Left ventricle myocardium inferior (tissue), 1 donor: ENCODE measurements at regions of chr2 and their contacts with region 1.

Region 1: DNA sequence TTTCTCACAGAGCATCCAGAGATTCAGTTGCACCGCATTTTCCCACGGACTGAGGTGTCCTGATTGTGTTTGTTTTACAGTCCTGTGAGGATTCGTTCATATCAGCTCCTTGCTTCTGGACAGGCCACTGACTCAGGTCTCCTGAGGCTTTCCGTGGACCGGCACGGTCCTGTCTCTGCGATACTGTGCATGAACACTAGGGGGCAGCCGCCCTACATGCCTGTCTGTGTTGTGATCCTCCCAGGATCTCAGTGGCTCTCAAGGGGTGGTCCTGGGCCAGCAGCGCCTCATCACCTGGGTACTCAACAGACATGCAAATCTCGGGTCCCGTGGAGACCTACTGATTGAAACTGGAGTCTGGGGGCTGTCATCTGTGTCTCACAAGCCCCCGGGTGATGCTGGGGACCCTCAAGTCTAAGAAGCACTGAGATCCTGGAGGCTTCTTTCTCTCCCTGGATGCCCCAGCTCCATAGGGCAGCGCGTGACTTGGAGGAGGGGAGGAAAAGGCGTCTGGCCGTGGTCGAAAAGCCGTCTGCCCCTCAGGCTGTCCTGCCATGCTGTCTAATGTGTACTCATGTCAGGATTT is 28.9 kb downstream of the IL1R2 start:
- DNase-seq: peak; percentile 89
- H3K4me3 ChIP-seq: no peak overlapping the region
- H3K27ac ChIP-seq: no peak overlapping the region
- H3K4me1 ChIP-seq: peaks cover 19% of the 10 kb centered on the region
- H3K27me3 ChIP-seq: no peaks in the 10 kb centered on the region
- CTCF ChIP-seq: peak; percentile 100

Region 2: GRCh38 chr2:100812116-100812515 is 1208.6 kb before region 1 on chr2:
- intact Hi-C with region 1: no loop called
- DNase-seq: no peak
- H3K4me3 ChIP-seq: no peak overlapping the region
- H3K27ac ChIP-seq: no peak overlapping the region
- H3K4me1 ChIP-seq: peaks cover 49% of the 10 kb centered on the region
- H3K27me3 ChIP-seq: no peaks in the 10 kb centered on the region
- CTCF ChIP-seq: no peak

Region 3: DNA sequence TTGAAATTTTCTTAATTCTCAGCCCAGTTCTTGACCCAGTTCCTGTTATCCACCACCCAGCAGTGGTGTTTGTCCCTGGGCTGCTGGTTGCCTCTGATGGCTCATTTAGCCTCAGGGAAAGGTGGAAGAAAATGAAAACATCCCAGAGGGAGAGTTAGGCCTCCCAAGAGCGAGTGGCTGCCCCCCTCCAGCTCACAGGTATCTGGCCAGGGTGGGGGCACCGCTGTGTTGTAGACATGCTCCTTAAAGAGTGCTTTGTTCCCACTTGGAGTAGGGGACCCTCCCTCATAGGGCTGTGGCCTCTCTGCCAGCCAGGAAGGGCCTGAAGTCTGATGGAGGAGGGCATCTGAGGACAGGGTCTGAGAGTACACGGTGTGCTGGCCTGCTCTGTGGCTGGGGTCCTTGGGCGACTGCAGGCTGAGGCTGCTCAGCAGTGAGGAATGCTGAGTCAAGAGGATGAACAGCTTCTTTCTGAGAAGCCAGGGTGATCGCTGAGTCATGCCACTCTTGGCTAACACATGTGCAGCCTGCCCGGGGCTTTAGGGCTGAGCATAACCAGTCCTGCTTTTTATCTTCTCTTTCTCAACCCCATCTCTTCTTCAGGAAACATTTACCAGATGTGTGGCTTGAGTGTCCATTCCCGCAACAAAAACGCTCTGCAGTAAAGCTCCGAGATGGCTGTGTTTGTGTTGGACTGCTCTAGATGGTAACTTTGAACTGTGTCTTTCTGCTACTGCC is 43.4 kb after region 1 on chr2:
- intact Hi-C with region 1: no loop called
- DNase-seq: peak; percentile 81
- H3K4me3 ChIP-seq: peak overlapping the region; percentile 26
- H3K27ac ChIP-seq: peak overlapping the region; percentile 96
- H3K4me1 ChIP-seq: peaks cover 87% of the 10 kb centered on the region
- H3K27me3 ChIP-seq: no peaks in the 10 kb centered on the region
- CTCF ChIP-seq: no peak

Region 4: GRCh38 chr2:102166189-102166845 is 145.6 kb after region 1 on chr2:
- intact Hi-C with region 1: loop called (anchors 5 kb)
- DNase-seq: no peak
- H3K4me3 ChIP-seq: no peak overlapping the region
- H3K27ac ChIP-seq: no peak overlapping the region
- H3K4me1 ChIP-seq: peaks cover 10% of the 10 kb centered on the region
- H3K27me3 ChIP-seq: no peaks in the 10 kb centered on the region
- CTCF ChIP-seq: peak; percentile 81

Region 5: DNA sequence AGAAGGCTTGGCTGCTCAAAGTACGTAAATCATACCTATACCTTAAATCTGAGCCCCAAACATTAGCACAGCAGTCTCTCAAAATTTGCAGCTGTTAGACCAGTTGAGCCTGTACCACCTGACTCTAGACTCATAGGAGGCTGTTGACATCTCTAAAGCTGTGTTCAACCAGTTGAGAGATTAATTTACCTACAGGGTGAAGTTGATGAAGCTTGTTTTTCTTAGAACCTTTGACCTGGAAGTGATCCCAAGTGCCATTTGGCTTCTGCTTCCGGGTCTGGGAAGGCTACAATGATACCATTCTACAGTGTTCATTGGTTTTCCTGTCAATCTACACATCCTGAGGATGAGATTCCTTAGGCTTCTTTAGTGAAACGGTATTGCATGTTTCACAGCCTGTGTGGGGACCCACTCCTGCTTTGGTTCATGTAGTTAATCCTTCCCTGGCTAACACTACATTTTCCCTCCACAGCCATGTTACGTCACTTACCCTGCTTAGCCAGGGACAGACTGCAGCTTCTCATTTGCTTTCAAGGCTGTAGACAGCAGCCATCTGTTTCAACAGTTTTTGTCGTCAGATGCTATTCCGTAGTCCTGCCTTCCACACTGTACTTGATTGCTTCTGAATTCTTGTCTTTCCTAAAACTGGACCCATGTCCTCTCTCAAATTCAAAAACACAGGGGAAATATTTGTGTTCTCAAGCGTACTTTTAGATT is 161.4 kb after region 1 on chr2:
- intact Hi-C with region 1: no loop called
- DNase-seq: no peak
- H3K4me3 ChIP-seq: no peak overlapping the region
- H3K27ac ChIP-seq: no peak overlapping the region
- H3K4me1 ChIP-seq: peaks cover 13% of the 10 kb centered on the region
- H3K27me3 ChIP-seq: peaks cover 16% of the 10 kb centered on the region
- CTCF ChIP-seq: no peak

Region 6: GRCh38 chr2:102240640-102241370 is 220.1 kb after region 1 on chr2:
- intact Hi-C with region 1: loop called (anchors 5 kb)
- DNase-seq: peak; percentile 91
- H3K4me3 ChIP-seq: peak overlapping the region; percentile 36
- H3K27ac ChIP-seq: peak overlapping the region; percentile 88
- H3K4me1 ChIP-seq: peaks cover 31% of the 10 kb centered on the region
- H3K27me3 ChIP-seq: peaks cover 7% of the 10 kb centered on the region
- CTCF ChIP-seq: peak; percentile 99

Region 7: GRCh38 chr2:102355526-102356380 is 335.1 kb after region 1 on chr2 and contains the start of gene IL18R1:
- intact Hi-C with region 1: loop called (anchors 10 kb)
- DNase-seq: peak; percentile 83
- H3K4me3 ChIP-seq: peak within 1 kb of the TSS; percentile 75
- H3K27ac ChIP-seq: peak within 1 kb of the TSS; percentile 70
- H3K4me1 ChIP-seq: peaks cover 18% of the 10 kb centered on the region
- H3K27me3 ChIP-seq: no peaks in the 10 kb centered on the region
- CTCF ChIP-seq: peak; percentile 88
- total RNA-seq, gene IL18R1: 1.8 TPM